ENCODE measurements at regions of chr4 and their contacts with region 1.

Region 1: DNA sequence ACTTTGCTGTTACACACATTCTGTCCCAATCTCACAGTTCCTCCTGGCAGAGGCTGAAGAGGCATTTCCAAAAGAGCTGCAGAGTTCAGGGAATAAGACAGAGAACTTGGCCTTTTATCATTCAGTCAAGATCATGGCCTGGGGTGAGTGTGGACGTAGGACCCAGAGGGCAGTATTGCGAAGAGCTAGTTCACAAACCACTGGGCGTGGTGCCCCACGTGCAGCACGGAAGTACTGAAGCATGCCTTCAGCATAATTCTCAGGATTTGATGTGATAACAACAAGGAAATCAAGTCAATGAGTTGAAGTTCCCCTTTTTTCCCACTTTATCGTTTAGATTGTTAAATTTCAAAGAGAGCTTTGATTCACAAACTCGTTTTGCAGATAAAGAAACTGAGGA is 117.7 kb downstream of the RELL1 start:
- DNase-seq: no peak
- H3K4me3 ChIP-seq: no peak overlapping the region
- H3K27ac ChIP-seq: no peak overlapping the region
- H3K4me1 ChIP-seq: no peaks in the 10 kb centered on the region
- H3K27me3 ChIP-seq: no peaks in the 10 kb centered on the region
- CTCF ChIP-seq: no peak
- POLR2A ChIP-seq: no peak

Region 2: GRCh38 chr4:37452952-37453280 is 115.6 kb before region 1 on chr4:
- intact Hi-C with region 1: loop called (anchors 5 kb)
- DNase-seq: peak; percentile 25 to 75
- H3K4me3 ChIP-seq: peak overlapping the region; percentile 37 to 46
- H3K27ac ChIP-seq: peak overlapping the region; percentile 75 to 78
- H3K4me1 ChIP-seq: no peaks in the 10 kb centered on the region
- H3K27me3 ChIP-seq: no peaks in the 10 kb centered on the region
- CTCF ChIP-seq: peak; percentile 49 to 78 (median 64)
- POLR2A ChIP-seq: no peak

Measured in uterus (tissue), 4 donors.